ENCODE measurements at regions of chr10 and their contacts with region 1.

Region 1: DNA sequence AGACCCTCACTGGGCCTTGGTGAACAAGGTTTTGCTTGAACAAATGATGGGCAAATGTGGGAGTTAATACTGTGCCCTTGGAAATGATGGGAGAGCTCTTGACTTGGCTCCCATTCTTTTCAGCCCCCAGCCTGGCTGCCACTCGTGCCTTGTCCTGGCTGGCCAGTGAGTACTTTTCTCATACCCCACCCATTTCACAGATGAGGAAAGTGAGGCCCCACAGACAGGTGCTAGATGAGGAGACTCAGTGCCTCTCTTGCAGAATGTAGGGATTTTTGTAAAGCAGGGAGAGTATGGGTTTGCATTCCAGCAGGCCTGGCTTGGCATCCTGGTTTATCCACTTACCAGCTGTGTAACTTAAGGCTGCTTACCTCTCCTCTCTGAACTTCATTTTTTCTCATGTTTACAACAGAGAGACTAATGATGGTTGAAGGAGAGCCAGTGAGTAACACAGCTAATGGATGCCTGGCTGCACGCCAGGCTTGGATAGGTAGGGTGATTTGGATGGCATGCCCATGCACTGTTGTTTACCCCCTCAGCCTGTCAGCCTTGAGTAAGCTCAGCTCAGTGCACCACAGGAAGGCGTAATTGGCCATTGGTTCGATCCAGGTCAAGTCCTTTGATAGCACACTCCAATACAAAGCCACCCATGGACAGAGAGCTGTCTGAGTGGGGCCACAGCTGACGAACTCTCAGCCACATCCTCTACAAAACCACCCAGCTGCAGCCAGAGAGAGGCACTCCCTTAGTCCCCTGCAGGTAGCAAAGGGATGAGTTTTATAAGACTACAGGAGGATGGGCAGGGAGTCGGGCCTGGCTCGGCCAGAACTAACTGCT is 436.8 kb downstream of the RPS24 start:
- DNase-seq: peak; percentile 28
- ATAC-seq: no peak; the same call in 2 of the 3 replicates
- H3K4me3 ChIP-seq: no peak overlapping the region
- H3K27ac ChIP-seq: peak overlapping the region; percentile 49
- H3K4me1 ChIP-seq: peaks cover 67% of the 10 kb centered on the region
- H3K27me3 ChIP-seq: no peaks in the 10 kb centered on the region
- CTCF ChIP-seq: no peak
- EP300 ChIP-seq: no peak
- POLR2A ChIP-seq: no peak
- RAD21 ChIP-seq: no peak

Region 2: DNA sequence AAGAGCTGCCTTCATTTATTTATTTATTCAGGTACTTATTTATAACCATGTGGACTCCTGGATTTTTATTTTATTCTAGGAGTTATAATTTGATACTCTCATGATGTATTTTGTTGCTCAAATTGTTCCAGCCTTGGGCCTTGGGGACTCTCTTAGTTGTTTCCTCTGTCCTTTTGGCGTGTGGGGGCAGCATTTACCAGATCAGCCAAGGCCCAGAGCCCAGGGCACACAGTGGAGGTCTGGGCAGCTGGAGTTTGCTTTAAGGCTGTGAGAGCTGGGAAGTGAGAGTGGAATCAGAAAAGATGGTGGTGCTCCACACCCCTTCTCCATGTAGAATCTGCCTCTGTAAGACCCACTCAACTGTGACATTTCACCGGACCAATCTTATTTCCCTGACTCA is 37.9 kb before region 1 on chr10:
- CTCF ChIA-PET with region 1: no interaction called
- POLR2A ChIA-PET with region 1: no interaction called
- in situ Hi-C with region 1: no loop called
- intact Hi-C with region 1: no loop called
- DNase-seq: peak; percentile 39
- ATAC-seq: peak; percentile 95
- H3K4me3 ChIP-seq: no peak overlapping the region
- H3K27ac ChIP-seq: no peak overlapping the region
- H3K4me1 ChIP-seq: peaks cover 22% of the 10 kb centered on the region
- H3K27me3 ChIP-seq: no peaks in the 10 kb centered on the region
- CTCF ChIP-seq: peak; percentile 77
- EP300 ChIP-seq: no peak
- POLR2A ChIP-seq: no peak
- RAD21 ChIP-seq: peak; percentile 68

Region 3: DNA sequence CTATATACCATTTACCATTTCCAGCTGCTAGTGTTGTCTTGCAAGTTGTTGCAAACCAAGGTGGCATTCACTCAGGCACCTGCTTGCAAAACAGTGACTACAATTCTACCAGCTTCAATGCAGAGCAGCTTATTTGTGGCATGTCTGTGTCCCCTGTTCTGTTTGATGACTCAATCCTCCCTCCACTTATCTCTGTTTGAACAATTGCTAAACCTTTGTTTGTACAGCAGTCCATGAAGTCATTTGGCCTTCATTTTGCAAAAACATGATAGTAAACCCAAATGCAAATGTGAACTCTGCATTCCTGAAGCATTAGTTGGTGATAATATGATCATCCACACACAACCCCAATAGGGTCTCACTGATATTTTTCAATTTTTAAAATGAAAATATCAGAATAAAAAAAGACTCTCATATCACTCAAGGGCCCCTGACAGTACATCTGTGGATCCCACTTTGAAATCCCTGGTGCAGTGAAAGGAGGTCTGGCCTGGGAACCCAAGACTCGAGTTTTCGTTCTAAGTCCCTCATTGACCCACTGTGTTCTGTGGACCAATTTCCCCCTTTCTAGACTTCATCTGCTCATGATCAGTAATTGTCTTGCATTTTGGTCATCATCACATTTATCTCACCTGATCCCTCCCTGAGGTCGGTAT is 11.4 kb before region 1 on chr10:
- CTCF ChIA-PET with region 1: no interaction called
- POLR2A ChIA-PET with region 1: interaction called, 25 read pairs
- in situ Hi-C with region 1: no loop called
- intact Hi-C with region 1: no loop called
- DNase-seq: peak; percentile 99
- ATAC-seq: peak; percentile 97
- H3K4me3 ChIP-seq: peak overlapping the region in 1 of 3 experiments; percentile 37; a peak in 1 of 6 replicates
- H3K27ac ChIP-seq: peak overlapping the region; percentile 97
- H3K4me1 ChIP-seq: peaks cover 72% of the 10 kb centered on the region
- H3K27me3 ChIP-seq: no peaks in the 10 kb centered on the region
- CTCF ChIP-seq: peak; percentile 16; the same call in 1 of the 2 replicates
- EP300 ChIP-seq: peak; percentile 99 to 100
- POLR2A ChIP-seq: peak; percentile 39 to 63; a peak in 2 of 4 replicates
- RAD21 ChIP-seq: no peak

Region 4: DNA sequence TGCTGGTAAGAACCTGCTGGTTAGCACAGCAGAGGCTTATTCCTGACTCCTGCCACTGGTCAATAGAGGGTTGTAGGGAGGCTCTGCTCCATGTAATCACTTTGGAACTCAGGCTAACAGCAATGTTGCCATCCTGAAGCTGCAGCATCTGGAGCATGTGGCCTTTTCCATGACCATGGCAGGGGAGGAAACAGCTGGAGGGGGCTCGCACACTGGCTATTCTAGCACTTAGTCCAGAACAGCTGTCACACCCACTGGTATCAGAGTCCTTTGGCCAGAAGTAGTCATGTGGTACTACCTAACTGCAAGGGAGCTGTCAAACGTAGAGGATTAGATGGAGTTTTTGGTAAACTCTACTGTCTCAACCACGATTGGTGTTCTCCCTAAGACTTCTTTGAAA is 13.2 kb after region 1 on chr10:
- CTCF ChIA-PET with region 1: no interaction called
- POLR2A ChIA-PET with region 1: no interaction called
- in situ Hi-C with region 1: no loop called
- intact Hi-C with region 1: no loop called
- DNase-seq: no peak
- ATAC-seq: no peak
- H3K4me3 ChIP-seq: no peak overlapping the region
- H3K27ac ChIP-seq: no peak overlapping the region
- H3K4me1 ChIP-seq: peaks cover 7% of the 10 kb centered on the region; the same call in 1 of the 2 replicates
- H3K27me3 ChIP-seq: no peaks in the 10 kb centered on the region
- CTCF ChIP-seq: no peak
- EP300 ChIP-seq: no peak
- POLR2A ChIP-seq: no peak
- RAD21 ChIP-seq: no peak

Region 5: DNA sequence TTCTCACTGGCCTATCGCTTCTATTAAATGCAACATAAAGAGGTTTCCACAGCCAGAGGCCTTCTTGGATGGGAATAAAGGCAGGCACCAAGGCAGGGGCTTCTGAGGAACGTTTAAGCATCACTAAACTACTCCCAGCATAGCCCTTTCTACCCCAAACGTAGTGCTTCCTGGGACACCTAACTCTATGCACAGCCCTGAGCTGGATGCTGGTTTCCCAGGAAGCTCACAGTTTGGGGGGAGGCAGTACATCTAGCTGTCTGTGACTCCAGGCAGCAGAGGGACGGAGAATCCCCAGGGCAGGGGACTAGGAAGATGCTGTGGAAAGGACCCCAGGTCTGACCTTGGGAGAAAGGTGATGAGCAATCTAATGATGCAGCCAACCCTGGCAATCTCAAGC is 405.4 kb after region 1 on chr10:
- CTCF ChIA-PET with region 1: no interaction called
- POLR2A ChIA-PET with region 1: no interaction called
- in situ Hi-C with region 1: no loop called
- intact Hi-C with region 1: no loop called
- DNase-seq: no peak
- ATAC-seq: no peak
- H3K4me3 ChIP-seq: no peak overlapping the region
- H3K27ac ChIP-seq: no peak overlapping the region
- H3K4me1 ChIP-seq: no peaks in the 10 kb centered on the region
- H3K27me3 ChIP-seq: peaks cover 1 to 18% of the 10 kb centered on the region in 2 experiments; a peak in 3 of 5 replicates
- CTCF ChIP-seq: no peak
- EP300 ChIP-seq: no peak
- POLR2A ChIP-seq: no peak
- RAD21 ChIP-seq: no peak